Heart right ventricle (tissue), 16 donors: ENCODE measurements at regions of chr19 and their contacts with region 1.

Region 1: GRCh38 chr19:55301459-55302317 is 17.9 kb downstream of the BRSK1 start:
- DNase-seq: peak; percentile 86 to 93
- ATAC-seq: peak; percentile 84 to 92 (median 90)
- H3K4me3 ChIP-seq: peak overlapping the region in 8 of 10 donors; percentile 7 to 51 (median 46)
- H3K27ac ChIP-seq: peak overlapping the region in 1 of 10 donors; percentile 62
- H3K4me1 ChIP-seq: peaks cover 0 to 9% (median 3%) of the 10 kb centered on the region in 9 donors
- H3K27me3 ChIP-seq: no peaks in the 10 kb centered on the region
- CTCF ChIP-seq: peak; percentile 92 to 99 (median 97)

Region 2: DNA sequence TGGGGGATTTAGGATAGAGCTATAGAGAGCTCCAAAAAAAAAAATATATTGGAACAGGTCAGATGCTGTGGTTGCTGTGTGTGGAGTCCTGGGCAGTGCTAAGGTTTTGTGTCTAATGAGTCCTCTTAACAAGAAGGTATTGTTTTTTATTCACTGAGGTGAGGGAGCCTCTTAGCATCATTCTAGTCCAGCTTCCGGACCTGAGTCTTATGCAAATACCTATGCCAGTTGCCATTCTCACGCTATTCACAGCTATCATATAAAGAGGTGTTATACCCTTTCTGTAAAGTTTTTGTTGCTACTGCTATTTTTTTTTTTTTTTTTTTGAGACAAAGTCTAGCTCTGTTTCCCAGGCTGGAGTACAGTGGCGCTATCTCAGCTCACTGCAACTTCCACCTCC is 334.1 kb before region 1 on chr19:
- intact Hi-C with region 1: no loop called
- DNase-seq: no peak
- ATAC-seq: no peak
- H3K4me3 ChIP-seq: no peak overlapping the region
- H3K27ac ChIP-seq: no peak overlapping the region
- H3K4me1 ChIP-seq: no peaks in the 10 kb centered on the region
- H3K27me3 ChIP-seq: peaks cover 0 to 14% (median 6%) of the 10 kb centered on the region in 7 donors
- CTCF ChIP-seq: no peak

Region 3: DNA sequence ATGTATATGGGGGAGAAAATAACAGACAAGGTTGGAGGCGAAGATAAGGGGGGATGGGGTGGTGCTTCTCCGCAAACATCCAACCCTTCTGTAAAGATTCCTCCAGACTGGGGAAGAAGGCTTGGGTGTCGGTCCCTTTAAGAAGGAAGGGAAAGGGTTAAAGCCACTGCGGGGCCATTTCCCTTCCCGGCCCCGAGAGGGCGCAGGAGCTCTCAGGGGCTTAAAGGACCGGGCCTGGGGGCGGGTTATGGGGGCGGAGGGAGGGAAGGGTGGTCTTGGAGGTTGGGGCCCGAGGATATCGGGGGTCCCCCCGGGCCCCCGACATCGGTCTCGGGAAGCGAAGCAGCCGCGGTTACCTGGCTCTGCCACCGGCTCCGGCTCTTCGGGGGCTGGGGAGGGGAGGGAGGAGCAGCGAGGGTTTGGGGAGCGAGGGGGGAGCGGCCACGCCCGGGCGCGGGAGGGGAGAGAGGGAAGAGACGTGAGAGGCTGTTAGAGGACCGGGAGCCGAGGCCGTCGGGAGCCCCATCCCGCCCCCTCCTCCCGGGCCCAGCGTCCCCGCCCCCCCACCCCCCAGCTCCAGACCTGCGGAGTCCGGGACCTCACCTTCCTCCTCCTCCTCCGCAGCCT is 155.5 kb before region 1 on chr19:
- intact Hi-C with region 1: no loop called
- DNase-seq: no peak
- ATAC-seq: peak in 3 of 8 donors; percentile 2 to 7 (median 2)
- H3K4me3 ChIP-seq: peak overlapping the region in 1 of 10 donors; percentile 26
- H3K27ac ChIP-seq: peak overlapping the region in 2 of 10 donors; percentile 28 to 31
- H3K4me1 ChIP-seq: peaks cover 0 to 41% (median 8%) of the 10 kb centered on the region in 9 donors
- H3K27me3 ChIP-seq: peaks cover 0 to 81% (median 72%) of the 10 kb centered on the region in 7 donors
- CTCF ChIP-seq: peak in 7 of 9 donors; percentile 26 to 51 (median 41)

Region 4: DNA sequence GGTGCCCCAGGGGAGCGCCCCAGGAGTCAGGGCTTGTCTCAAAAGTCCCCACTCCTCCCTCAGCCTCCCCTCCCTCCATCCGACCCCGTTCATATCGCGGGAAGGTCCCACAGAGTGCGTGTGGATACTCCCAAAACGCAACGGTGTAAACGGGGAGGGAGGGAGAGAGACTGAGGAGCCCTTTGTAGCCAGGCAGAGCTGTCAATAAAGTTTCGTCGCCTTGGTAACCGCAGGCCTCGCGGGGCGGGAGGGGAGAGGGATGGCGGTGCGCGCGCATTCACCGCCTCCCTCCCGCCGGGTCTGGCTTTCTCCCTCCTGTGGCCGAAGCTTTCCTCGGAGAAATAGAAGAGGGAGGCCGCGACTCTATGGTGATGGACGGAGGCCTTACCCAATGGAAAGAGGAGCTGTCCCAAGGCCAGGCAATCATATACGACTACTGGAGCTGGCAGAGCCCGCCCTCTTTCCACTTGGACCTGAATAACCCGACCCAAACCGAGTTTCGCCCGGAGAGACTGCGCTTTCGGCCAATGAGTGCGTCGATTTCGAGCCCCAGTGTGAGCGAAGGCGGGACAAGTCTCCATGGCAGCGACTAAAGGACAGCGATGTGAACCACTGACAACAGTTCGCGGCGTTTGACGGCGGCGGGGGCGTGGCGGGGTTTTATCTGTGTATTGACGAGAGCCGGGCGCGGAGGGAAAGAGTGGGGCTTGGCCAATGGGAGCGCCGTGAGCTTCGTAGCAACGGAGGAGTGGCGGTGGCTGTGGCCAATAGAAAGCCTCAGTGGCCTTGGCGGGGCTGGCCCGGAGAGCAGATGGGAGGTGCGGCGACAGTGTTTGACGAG is 37.6 kb after region 1 on chr19 and contains the start of gene KMT5C:
- intact Hi-C with region 1: loop called in 3 of 10 experiments (anchors 5 kb)
- DNase-seq: peak; percentile 100
- ATAC-seq: peak; percentile 91 to 97 (median 95)
- H3K4me3 ChIP-seq: peak within 1 kb of the TSS; percentile 33 to 92 (median 72)
- H3K27ac ChIP-seq: peak within 1 kb of the TSS; percentile 65 to 95 (median 90)
- H3K4me1 ChIP-seq: peaks cover 7 to 24% (median 19%) of the 10 kb centered on the region in 9 donors
- H3K27me3 ChIP-seq: peaks cover 0 to 7% (median 0%) of the 10 kb centered on the region in 7 donors
- CTCF ChIP-seq: peak in 8 of 9 donors; percentile 26 to 68 (median 50)
- total RNA-seq, gene KMT5C: 4.0 to 9.2 (median 6.9) TPM

Region 5: DNA sequence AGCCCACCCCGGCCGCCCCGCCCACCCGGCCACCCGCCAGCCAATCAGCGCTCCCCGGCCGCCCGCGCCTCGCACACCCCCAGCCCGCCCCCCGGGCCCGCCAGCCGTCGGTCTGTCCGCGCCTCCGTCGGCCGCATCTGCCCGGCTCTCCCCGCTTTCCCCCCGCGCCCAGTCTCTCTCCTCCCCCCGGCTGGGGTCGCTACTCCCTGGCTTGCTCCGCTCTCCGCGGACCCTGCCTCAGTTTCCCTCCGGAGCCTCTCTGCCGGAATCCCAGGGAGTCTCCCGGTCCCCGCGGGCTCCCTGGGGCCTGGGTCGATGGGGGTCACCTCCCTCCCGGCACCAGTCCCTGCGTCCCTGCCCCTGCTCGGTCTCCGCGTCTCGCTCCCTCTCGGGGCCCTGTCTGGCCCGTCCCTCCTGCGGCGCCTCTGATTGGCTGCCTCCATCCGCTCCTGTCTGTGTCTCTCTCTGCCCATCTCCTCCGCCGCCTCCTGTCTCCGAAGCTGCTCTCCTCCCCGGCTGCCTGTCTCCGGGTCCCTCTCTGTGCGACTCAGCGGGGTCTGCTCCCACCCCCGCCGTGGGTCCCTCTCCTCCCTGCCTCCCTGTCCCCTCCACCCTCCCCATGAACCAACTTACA is 68.1 kb after region 1 on chr19:
- intact Hi-C with region 1: loop called in 1 of 10 experiments (anchors 5 kb)
- DNase-seq: no peak
- ATAC-seq: peak in 2 of 8 donors; percentile 10 to 38
- H3K4me3 ChIP-seq: peak overlapping the region in 7 of 10 donors; percentile 8 to 41 (median 23)
- H3K27ac ChIP-seq: no peak overlapping the region
- H3K4me1 ChIP-seq: peaks cover 3 to 22% (median 12%) of the 10 kb centered on the region in 9 donors
- H3K27me3 ChIP-seq: peaks cover 22 to 84% (median 75%) of the 10 kb centered on the region in 7 donors
- CTCF ChIP-seq: no peak

Region 6: GRCh38 chr19:55418185-55418584 is 116.5 kb after region 1 on chr19:
- intact Hi-C with region 1: loop called in 4 of 10 experiments (anchors 10 kb)
- DNase-seq: peak in 1 of 2 donors; percentile 64
- ATAC-seq: peak; percentile 75 to 92 (median 86)
- H3K4me3 ChIP-seq: no peak overlapping the region
- H3K27ac ChIP-seq: no peak overlapping the region
- H3K4me1 ChIP-seq: no peaks in the 10 kb centered on the region
- H3K27me3 ChIP-seq: peaks cover 0 to 17% (median 7%) of the 10 kb centered on the region in 7 donors
- CTCF ChIP-seq: peak; percentile 39 to 76 (median 70)

Region 7: DNA sequence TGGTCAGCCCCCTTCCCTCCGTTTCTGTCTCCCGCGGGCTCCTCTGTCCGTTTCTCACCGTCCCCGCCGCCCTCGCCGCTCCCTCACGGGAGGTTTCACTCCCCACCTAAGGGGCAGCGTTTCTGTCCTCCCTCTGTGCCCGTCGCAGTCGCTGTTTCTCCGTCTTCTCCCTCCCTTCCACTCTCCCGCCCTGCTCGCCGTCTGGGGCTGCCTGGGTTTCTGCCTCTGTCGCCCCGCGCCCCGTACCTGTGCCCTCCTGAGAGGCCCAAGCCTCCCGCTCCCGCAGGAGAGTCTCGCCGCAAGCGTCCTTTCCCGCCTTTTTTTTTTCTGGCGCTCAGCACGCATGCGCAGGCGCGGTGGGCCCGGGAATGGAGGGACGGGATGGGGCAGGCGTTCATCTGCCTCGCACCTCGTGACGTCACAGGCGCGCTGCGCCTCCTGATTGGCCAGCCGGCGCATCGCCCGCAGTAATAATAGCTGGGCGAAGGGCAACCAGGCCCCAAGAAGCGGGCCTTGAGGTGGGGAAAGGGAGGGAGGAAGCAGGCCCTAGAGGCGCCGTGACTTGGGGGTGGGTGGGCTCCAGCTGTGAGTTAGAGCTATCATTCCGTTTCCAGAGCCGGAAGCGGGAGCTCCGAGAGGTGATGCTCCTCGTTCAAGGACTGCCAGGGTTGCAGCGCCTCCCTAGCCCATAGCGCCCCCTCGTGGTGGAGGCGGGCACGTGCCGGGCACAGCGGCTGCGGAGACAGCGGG is 202.0 kb after region 1 on chr19:
- intact Hi-C with region 1: loop called in 2 of 10 experiments (anchors 10 kb)
- DNase-seq: peak; percentile 92 to 96
- ATAC-seq: peak; percentile 96 to 99 (median 98)
- H3K4me3 ChIP-seq: peak overlapping the region in 9 of 10 donors; percentile 14 to 62 (median 53)
- H3K27ac ChIP-seq: peak overlapping the region in 9 of 10 donors; percentile 42 to 86 (median 57)
- H3K4me1 ChIP-seq: peaks cover 0 to 14% (median 3%) of the 10 kb centered on the region in 9 donors
- H3K27me3 ChIP-seq: no peaks in the 10 kb centered on the region
- CTCF ChIP-seq: peak; percentile 98 to 100 (median 99)